SK-N-SH (cell line): ENCODE measurements at regions of chr5 and their contacts with region 1.

Region 1: DNA sequence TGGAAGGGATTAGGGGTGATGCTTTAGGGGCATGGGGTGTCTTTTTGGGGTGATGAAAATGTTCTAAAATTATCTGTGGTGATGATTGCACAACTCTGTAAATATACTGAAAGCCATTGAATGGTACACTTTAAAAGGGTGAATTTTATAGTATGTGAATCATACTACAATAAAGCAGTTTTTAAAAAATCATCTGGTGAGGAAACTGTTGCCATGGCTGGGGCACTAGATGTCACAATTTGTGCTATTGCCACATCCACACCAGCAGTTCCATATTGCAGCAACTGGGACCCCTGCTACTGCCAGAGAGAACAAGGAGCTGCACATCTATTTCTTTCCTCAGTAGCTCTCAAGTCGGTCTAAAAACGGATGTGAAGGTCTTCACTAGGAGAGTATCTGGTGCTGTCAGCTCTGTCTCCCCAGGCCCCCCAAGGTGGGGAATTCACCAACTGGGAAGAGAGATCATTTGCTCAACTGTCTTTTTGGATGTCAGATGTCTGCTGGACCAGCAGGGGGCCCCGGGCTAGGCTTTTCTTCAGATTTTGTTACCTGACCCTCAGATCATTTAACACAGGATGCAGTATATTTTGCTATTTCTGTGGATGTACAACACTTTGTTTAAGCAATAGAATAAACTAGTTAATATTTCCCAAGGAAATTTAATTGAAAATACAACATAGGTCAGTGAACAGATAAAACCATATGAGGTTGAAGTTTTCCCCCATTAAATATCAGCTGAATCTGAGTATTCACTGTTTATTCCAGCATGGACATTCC is 13.2 kb downstream of the CMYA5 start:
- DNase-seq: peak; percentile 62
- H3K4me3 ChIP-seq: no peak overlapping the region
- H3K27ac ChIP-seq: no peak overlapping the region
- H3K4me1 ChIP-seq: no peaks in the 10 kb centered on the region
- H3K27me3 ChIP-seq: no peaks in the 10 kb centered on the region
- CTCF ChIP-seq: peak; percentile 63
- EP300 ChIP-seq: no peak
- RAD21 ChIP-seq: peak; percentile 52

Region 2: GRCh38 chr5:79689541-79690466 is 13.0 kb before region 1 on chr5 and contains the start of gene CMYA5:
- CTCF ChIA-PET with region 1: interaction called, 13 read pairs
- POLR2A ChIA-PET with region 1: no interaction called
- DNase-seq: no peak
- H3K4me3 ChIP-seq: no peak within 1 kb of the TSS
- H3K27ac ChIP-seq: no peak within 1 kb of the TSS
- H3K4me1 ChIP-seq: no peaks in the 10 kb centered on the region; a peak in 1 of 4 replicates
- H3K27me3 ChIP-seq: no peaks in the 10 kb centered on the region
- CTCF ChIP-seq: no peak
- EP300 ChIP-seq: no peak
- RAD21 ChIP-seq: no peak
- polyA plus RNA-seq, gene CMYA5: 0.12 and 0.21 TPM in 2 replicates

Region 3: GRCh38 chr5:79716839-79717238 is 14.0 kb after region 1 on chr5:
- CTCF ChIA-PET with region 1: interaction called, 17 read pairs
- POLR2A ChIA-PET with region 1: no interaction called
- DNase-seq: no peak
- H3K4me3 ChIP-seq: no peak overlapping the region
- H3K27ac ChIP-seq: no peak overlapping the region
- H3K4me1 ChIP-seq: no peaks in the 10 kb centered on the region
- H3K27me3 ChIP-seq: no peaks in the 10 kb centered on the region
- CTCF ChIP-seq: no peak
- EP300 ChIP-seq: no peak
- RAD21 ChIP-seq: no peak

Region 4: GRCh38 chr5:79734386-79734785 is 31.6 kb after region 1 on chr5:
- CTCF ChIA-PET with region 1: no interaction called
- POLR2A ChIA-PET with region 1: no interaction called
- DNase-seq: no peak
- H3K4me3 ChIP-seq: no peak overlapping the region
- H3K27ac ChIP-seq: no peak overlapping the region
- H3K4me1 ChIP-seq: no peaks in the 10 kb centered on the region
- H3K27me3 ChIP-seq: peaks cover 23% of the 10 kb centered on the region; the same call in 1 of the 2 replicates
- CTCF ChIP-seq: no peak
- EP300 ChIP-seq: no peak
- RAD21 ChIP-seq: no peak

Region 5: DNA sequence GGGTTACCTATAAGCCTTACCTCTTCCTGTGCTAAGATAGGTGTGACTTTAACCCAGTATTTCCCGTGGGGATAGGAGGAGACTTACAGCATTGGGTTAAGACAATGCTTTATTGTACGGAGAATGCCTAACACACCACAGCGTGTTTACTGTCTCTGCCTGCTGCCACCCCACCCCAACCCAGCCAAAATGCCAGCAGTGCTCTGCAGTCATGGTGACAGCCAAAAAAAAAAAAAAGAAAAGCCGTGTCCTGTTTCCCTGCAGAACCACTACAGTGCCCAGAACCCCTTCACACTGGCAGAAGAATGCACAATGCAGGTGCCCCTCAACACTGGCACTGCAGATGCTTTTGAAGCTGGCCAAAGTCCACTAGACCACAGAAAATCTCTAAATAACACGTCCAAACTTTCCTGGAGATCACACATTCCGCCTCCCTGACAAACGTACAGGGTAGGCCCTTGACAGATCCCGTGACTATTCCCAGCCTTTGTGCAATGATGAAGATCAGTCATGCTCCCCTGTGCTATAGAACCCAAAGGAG is 450.9 kb after region 1 on chr5:
- CTCF ChIA-PET with region 1: no interaction called
- POLR2A ChIA-PET with region 1: no interaction called
- DNase-seq: no peak
- H3K4me3 ChIP-seq: no peak overlapping the region
- H3K27ac ChIP-seq: no peak overlapping the region
- H3K4me1 ChIP-seq: peaks cover 0 to 8% of the 10 kb centered on the region in 2 experiments; a peak in 1 of 4 replicates
- H3K27me3 ChIP-seq: no peaks in the 10 kb centered on the region
- CTCF ChIP-seq: no peak
- EP300 ChIP-seq: no peak
- RAD21 ChIP-seq: no peak